AG04450 (cell line): ENCODE measurements at regions of chr14 and their contacts with region 1.

Region 1: DNA sequence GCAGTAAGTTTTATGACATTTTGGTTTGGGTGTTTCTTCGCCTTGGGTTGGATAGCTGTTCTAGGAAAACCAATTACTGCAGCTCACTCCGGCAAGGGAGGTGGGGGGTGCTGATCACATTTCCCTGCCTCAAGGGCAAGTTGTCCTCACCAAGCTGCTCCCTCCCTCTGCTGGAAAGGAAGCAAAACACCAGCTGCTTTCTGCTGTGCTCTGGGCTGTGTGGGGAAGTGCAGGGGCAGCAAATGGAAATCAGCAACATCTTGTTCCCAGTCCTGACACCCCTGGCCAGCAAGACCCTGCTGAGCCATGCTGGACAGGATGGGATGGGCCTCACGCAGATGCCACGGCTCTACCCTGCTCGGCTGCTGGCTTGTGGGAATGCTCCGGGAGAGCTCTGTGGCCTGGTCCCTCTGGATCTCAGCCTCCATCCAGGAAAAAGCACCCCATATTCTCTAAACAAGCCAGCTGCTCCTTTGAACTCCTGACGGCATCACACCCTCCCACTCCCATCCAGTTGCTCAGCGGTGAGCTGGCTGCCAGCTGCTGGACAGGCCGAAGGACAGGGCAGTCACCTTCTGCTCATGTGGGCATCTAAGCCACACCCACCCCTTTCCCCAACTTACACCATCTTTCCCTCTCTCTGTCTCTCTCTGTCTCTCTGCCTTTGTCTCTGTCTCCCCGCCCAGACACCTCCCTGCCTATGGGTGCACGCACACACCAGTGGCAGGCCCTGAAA is 52.4 kb upstream of the EIF5 start:
- DNase-seq: no peak
- H3K4me3 ChIP-seq: no peak overlapping the region
- H3K27ac ChIP-seq: no peak overlapping the region
- H3K27me3 ChIP-seq: peaks cover 36% of the 10 kb centered on the region
- CTCF ChIP-seq: peak; percentile 66

Region 2: DNA sequence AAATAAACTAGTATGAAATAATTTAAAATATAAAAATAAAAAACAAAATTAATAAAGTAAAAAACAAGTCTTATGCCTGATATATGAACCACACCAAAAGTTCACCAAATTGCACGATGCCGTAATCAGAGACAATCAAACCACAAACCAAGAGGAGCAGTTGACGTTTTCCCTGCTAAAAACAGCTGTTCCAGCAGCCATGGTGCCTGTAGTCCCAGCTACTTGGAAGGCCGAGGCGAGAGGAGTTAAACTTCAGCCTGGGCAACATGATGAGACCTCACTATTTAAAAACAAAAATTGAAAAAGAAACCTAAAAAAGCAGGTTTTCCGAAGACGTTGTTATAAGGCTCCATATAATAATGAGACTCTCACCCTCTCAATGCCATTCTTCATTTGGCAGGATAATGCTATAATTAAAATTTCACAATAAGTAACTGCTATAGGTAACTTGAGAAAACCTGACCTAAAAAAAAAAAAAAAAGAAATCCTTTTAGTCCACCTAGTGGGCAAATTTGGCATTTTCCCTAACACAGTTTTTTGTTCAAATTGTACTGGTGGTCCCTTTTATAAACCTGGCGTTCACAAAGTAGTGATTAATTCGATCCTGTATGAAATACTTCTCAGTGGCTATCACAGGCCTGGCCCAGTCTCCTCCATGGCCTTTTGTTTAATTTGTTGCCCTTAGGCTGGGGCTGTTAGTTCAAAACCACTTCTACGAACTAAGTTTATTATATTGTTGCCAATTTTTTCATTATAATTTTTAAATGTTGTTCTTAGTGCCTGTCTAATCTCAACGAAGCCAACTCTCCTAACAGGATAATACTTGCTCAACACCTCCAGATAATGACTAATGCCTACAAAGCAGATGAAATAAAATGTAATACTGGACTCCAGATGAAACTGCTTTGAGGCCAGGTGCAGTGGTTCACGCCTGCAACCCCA is 96.3 kb before region 1 on chr14:
- CTCF ChIA-PET with region 1: interaction called, 6 read pairs
- POLR2A ChIA-PET with region 1: interaction called, 13 read pairs
- DNase-seq: no peak
- H3K4me3 ChIP-seq: no peak overlapping the region
- H3K27ac ChIP-seq: no peak overlapping the region
- H3K27me3 ChIP-seq: peaks cover 52% of the 10 kb centered on the region
- CTCF ChIP-seq: peak; percentile 71

Region 3: GRCh38 chr14:103198131-103199105 is 83.2 kb before region 1 on chr14:
- CTCF ChIA-PET with region 1: no interaction called
- POLR2A ChIA-PET with region 1: no interaction called
- DNase-seq: peak; percentile 27
- H3K4me3 ChIP-seq: no peak overlapping the region
- H3K27ac ChIP-seq: peak overlapping the region; percentile 48
- H3K27me3 ChIP-seq: peaks cover 21% of the 10 kb centered on the region
- CTCF ChIP-seq: no peak

Region 4: GRCh38 chr14:103292426-103293374 is 11.0 kb after region 1 on chr14:
- CTCF ChIA-PET with region 1: interaction called, 23 read pairs
- POLR2A ChIA-PET with region 1: no interaction called
- DNase-seq: peak; percentile 21
- H3K4me3 ChIP-seq: no peak overlapping the region
- H3K27ac ChIP-seq: no peak overlapping the region
- H3K27me3 ChIP-seq: peaks cover 40% of the 10 kb centered on the region
- CTCF ChIP-seq: peak; percentile 97